ENCODE measurements at regions of chr11 and their contacts with region 1.

Region 1: GRCh38 chr11:94424662-94425061 is 23.4 kb upstream of the GPR83 start:
- DNase-seq: no peak
- ATAC-seq: no peak
- H3K4me3 ChIP-seq: no peak overlapping the region
- H3K27ac ChIP-seq: no peak overlapping the region
- H3K4me1 ChIP-seq: no peaks in the 10 kb centered on the region
- H3K27me3 ChIP-seq: no peaks in the 10 kb centered on the region
- CTCF ChIP-seq: no peak

Region 2: GRCh38 chr11:93895106-93895862 is 529.4 kb before region 1 on chr11:
- intact Hi-C with region 1: loop called in 1 of 3 experiments (anchors 10 kb)
- DNase-seq: peak in 1 of 6 donors; percentile 24
- ATAC-seq: peak; percentile 83 to 97 (median 92)
- H3K4me3 ChIP-seq: no peak overlapping the region
- H3K27ac ChIP-seq: no peak overlapping the region
- H3K4me1 ChIP-seq: no peaks in the 10 kb centered on the region
- H3K27me3 ChIP-seq: no peaks in the 10 kb centered on the region
- CTCF ChIP-seq: peak; percentile 39 to 62 (median 62)

Measured in pancreas (tissue), 10 donors.